ENCODE measurements at regions of chr9 and their contacts with region 1.

Region 1: GRCh38 chr9:115672477-115673316 is 480.9 kb upstream of the PAPPA start:
- DNase-seq: peak; percentile 94
- H3K4me3 ChIP-seq: no peak overlapping the region
- H3K27me3 ChIP-seq: no peaks in the 10 kb centered on the region
- CTCF ChIP-seq: no peak

Region 2: DNA sequence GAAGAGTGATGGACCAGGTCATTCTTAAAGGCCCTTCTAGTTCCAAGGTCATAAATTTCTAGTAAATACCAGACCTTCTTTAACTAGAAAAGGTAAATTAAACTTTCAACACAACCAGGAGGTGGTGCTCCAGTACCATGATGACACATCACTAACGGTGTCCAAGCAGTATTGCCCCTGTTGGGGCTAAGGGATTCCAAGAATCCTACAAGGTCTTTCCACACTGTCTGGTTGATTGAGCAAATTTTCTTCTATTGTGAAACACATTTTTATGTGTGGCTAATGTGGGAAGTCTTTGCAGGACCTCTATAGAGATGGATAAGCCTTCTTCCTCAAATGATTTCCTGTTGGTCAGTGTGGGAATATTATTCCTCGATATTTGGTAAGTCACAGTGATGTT is 21.3 kb after region 1 on chr9:
- CTCF ChIA-PET with region 1: interaction called, 4 read pairs
- POLR2A ChIA-PET with region 1: interaction called, 13 read pairs
- DNase-seq: peak; percentile 86
- H3K4me3 ChIP-seq: no peak overlapping the region
- H3K27me3 ChIP-seq: no peaks in the 10 kb centered on the region
- CTCF ChIP-seq: peak; percentile 52

Region 3: GRCh38 chr9:115739096-115739875 is 66.6 kb after region 1 on chr9:
- CTCF ChIA-PET with region 1: no interaction called
- POLR2A ChIA-PET with region 1: no interaction called
- DNase-seq: no peak
- H3K4me3 ChIP-seq: no peak overlapping the region
- H3K27me3 ChIP-seq: no peaks in the 10 kb centered on the region
- CTCF ChIP-seq: no peak